Naive thymus-derived CD4-positive, alpha-beta T cell (primary cell): ENCODE measurements at regions of chr7 and their contacts with region 1.

Region 1: GRCh38 chr7:158976849-158977593 is 120.7 kb downstream of the DYNC2I1 start:
- DNase-seq: peak; percentile 77 to 94 (median 85)
- ATAC-seq: peak; percentile 93
- H3K4me3 ChIP-seq: peak overlapping the region; percentile 55
- H3K4me3 Mint-ChIP-seq: peak overlapping the region; percentile 74 to 94 (median 88)
- H3K27ac ChIP-seq: peak overlapping the region; percentile 57
- H3K27ac Mint-ChIP-seq: peak overlapping the region; percentile 72 to 93 (median 83)
- H3K4me1 ChIP-seq: peaks cover 9 to 11% of the 10 kb centered on the region in 2 donors
- H3K4me1 Mint-ChIP-seq: peaks cover 11 to 23% (median 20%) of the 10 kb centered on the region in 7 donors
- H3K27me3 ChIP-seq: no peaks in the 10 kb centered on the region
- H3K27me3 Mint-ChIP-seq: no peaks in the 10 kb centered on the region

Region 2: DNA sequence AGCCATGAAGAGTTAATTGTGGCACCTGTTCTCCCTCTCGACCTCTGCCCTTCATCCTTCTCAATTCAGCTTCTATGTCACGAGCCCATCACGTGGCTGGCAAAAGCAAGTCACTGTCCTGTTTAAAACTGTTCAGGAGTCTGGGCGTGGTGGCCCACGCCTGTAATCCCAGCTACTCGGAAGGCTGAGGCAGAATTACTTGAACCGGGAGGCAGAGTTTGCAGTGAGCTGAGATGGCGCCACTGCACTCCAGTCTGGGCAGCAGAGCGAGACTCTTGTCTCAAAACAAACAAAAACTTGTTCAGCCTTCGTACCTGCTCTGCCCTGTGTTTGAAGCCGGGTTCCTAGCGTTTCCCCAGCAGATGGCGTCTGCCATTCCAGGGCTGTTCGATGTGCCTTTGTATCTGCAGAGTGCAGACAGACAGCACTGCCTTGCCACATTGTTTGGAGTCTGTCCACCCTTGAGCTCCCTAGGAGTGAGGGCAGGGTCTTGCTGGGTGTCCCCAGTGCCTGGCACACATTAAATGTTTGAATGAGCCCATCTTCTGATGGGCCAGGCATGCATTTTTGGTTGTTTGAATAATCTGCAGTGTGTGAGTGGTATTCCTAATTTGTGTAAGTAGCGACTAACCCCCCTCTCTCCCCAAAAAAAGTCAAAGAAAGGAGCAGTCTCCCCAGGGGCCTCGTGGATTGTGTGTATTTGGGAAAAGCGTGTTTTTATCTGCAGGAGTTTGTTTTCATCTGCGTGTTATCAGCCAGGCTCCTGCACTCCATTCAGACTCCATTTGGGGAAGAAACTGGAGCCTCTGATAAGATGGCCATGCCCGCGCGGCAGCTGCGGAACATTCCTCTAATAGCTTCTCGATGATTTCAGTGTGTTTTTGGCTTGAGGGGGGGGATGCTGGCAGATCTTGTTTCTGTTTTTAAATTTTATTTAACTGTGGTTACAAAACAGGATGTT is 1579.0 kb before region 1 on chr7:
- CTCF ChIA-PET with region 1: no interaction called
- POLR2A ChIA-PET with region 1: no interaction called
- intact Hi-C with region 1: no loop called
- DNase-seq: peak in 2 of 9 donors; percentile 26 to 32
- ATAC-seq: peak; percentile 50
- H3K4me3 ChIP-seq: no peak overlapping the region
- H3K4me3 Mint-ChIP-seq: no peak overlapping the region
- H3K27ac ChIP-seq: no peak overlapping the region
- H3K27ac Mint-ChIP-seq: peak overlapping the region in 6 of 9 donors; percentile 9 to 73 (median 45)
- H3K4me1 ChIP-seq: no peaks in the 10 kb centered on the region
- H3K4me1 Mint-ChIP-seq: peaks cover 15 to 31% (median 20%) of the 10 kb centered on the region in 7 donors
- H3K27me3 ChIP-seq: no peaks in the 10 kb centered on the region
- H3K27me3 Mint-ChIP-seq: no peaks in the 10 kb centered on the region

Region 3: DNA sequence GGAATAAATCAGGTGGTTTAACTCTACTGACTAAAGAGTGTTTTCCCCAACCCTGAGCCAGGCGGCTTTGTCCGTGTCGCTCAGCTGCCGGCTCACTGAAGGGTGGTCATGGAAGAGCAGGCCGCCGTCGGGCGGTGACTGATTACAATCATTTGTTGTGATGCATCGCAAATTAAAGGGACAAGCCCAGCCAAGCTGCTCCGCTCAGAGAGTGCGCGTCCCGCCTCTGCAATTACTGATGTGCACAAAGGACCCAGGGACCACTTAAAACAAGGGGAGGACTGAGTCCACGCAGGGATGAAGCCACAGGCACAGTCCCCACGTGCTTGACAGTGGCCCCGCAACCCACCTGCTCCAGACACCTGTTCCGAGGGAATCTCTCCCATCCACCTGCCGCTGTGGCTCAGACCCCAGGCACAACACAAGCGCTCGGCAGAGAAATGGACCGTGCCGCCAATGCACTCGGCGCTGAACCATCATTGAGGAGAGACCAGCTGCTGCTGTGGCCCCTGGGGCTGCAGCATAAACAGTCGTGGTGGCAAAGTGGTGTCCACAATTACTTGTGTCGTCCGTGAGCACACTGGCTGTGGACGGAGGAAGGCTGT is 915.9 kb before region 1 on chr7:
- CTCF ChIA-PET with region 1: no interaction called
- POLR2A ChIA-PET with region 1: no interaction called
- intact Hi-C with region 1: no loop called
- DNase-seq: no peak
- ATAC-seq: no peak
- H3K4me3 ChIP-seq: no peak overlapping the region
- H3K4me3 Mint-ChIP-seq: no peak overlapping the region
- H3K27ac ChIP-seq: no peak overlapping the region
- H3K27ac Mint-ChIP-seq: no peak overlapping the region
- H3K4me1 ChIP-seq: no peaks in the 10 kb centered on the region
- H3K4me1 Mint-ChIP-seq: no peaks in the 10 kb centered on the region
- H3K27me3 ChIP-seq: no peaks in the 10 kb centered on the region
- H3K27me3 Mint-ChIP-seq: peaks cover 0 to 18% (median 0%) of the 10 kb centered on the region in 5 donors

Region 4: GRCh38 chr7:158394936-158395335 is 582.1 kb before region 1 on chr7:
- CTCF ChIA-PET with region 1: no interaction called
- POLR2A ChIA-PET with region 1: no interaction called
- intact Hi-C with region 1: loop called in 1 of 2 experiments (anchors 5 kb)
- DNase-seq: peak in 5 of 9 donors; percentile 16 to 35 (median 25)
- ATAC-seq: no peak
- H3K4me3 ChIP-seq: no peak overlapping the region
- H3K4me3 Mint-ChIP-seq: no peak overlapping the region
- H3K27ac ChIP-seq: no peak overlapping the region
- H3K27ac Mint-ChIP-seq: no peak overlapping the region
- H3K4me1 ChIP-seq: no peaks in the 10 kb centered on the region
- H3K4me1 Mint-ChIP-seq: no peaks in the 10 kb centered on the region
- H3K27me3 ChIP-seq: no peaks in the 10 kb centered on the region
- H3K27me3 Mint-ChIP-seq: no peaks in the 10 kb centered on the region

Region 5: GRCh38 chr7:158495786-158496185 is 481.2 kb before region 1 on chr7:
- CTCF ChIA-PET with region 1: no interaction called
- POLR2A ChIA-PET with region 1: no interaction called
- intact Hi-C with region 1: loop called in 1 of 2 experiments (anchors 2 kb)
- DNase-seq: peak in 1 of 9 donors; percentile 3
- ATAC-seq: peak; percentile 20
- H3K4me3 ChIP-seq: no peak overlapping the region
- H3K4me3 Mint-ChIP-seq: peak overlapping the region in 1 of 10 donors; percentile 43
- H3K27ac ChIP-seq: no peak overlapping the region
- H3K27ac Mint-ChIP-seq: no peak overlapping the region
- H3K4me1 ChIP-seq: no peaks in the 10 kb centered on the region
- H3K4me1 Mint-ChIP-seq: peaks cover 0 to 5% (median 0%) of the 10 kb centered on the region in 7 donors
- H3K27me3 ChIP-seq: no peaks in the 10 kb centered on the region
- H3K27me3 Mint-ChIP-seq: peaks cover 0 to 33% (median 12%) of the 10 kb centered on the region in 5 donors

Region 6: DNA sequence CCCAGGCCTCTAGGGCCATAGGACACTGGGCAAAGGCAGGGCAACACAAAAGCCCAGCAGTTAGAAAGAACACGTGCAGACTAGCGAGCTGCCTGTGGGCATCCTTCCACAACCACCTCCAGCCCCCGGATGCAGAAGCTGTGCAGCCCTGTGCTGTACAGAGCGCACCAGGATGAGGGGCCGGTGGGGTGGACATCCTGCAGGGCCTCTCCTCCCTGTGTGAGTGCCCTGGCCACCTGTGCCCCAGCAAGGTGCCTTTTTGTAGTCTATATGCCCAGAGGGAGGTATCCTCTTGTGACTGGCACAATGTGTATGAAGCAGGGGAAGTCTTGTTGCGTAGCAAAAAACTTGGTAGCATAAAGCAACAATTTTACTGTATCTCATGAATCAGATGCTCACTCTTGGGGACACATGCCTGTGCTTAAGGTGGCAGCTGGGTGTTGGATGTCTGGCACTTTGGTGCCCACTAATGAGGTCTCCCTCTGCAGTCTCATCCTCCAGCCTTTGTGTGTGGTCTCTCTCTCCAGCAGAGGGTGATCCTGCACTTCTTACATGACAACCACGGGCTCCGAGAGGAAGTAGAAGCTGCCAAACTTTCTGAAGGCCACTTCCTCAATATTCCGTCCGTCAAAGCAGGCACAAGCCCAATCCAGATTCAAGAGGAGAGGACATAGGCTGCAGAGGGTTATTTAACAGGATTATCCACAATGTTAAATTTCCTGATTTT is 281.1 kb before region 1 on chr7:
- CTCF ChIA-PET with region 1: interaction called, 97 read pairs
- POLR2A ChIA-PET with region 1: interaction called, 12 read pairs
- intact Hi-C with region 1: loop called in 1 of 2 experiments (anchors 1 kb)
- DNase-seq: peak in 7 of 9 donors; percentile 27 to 69 (median 58)
- ATAC-seq: peak; percentile 97
- H3K4me3 ChIP-seq: no peak overlapping the region
- H3K4me3 Mint-ChIP-seq: peak overlapping the region in 6 of 10 donors; percentile 59 to 77 (median 66)
- H3K27ac ChIP-seq: no peak overlapping the region
- H3K27ac Mint-ChIP-seq: peak overlapping the region; percentile 41 to 87 (median 75)
- H3K4me1 ChIP-seq: peaks cover 0 to 5% of the 10 kb centered on the region in 2 donors
- H3K4me1 Mint-ChIP-seq: peaks cover 5 to 57% (median 11%) of the 10 kb centered on the region in 7 donors
- H3K27me3 ChIP-seq: no peaks in the 10 kb centered on the region
- H3K27me3 Mint-ChIP-seq: no peaks in the 10 kb centered on the region

Region 7: GRCh38 chr7:158760936-158761335 is 216.1 kb before region 1 on chr7:
- CTCF ChIA-PET with region 1: interaction called, 7 read pairs
- POLR2A ChIA-PET with region 1: no interaction called
- intact Hi-C with region 1: loop called in 1 of 2 experiments (anchors 1 kb)
- DNase-seq: peak in 5 of 9 donors; percentile 32 to 52 (median 45)
- ATAC-seq: peak; percentile 57
- H3K4me3 ChIP-seq: no peak overlapping the region
- H3K4me3 Mint-ChIP-seq: no peak overlapping the region
- H3K27ac ChIP-seq: no peak overlapping the region
- H3K27ac Mint-ChIP-seq: peak overlapping the region in 8 of 9 donors; percentile 22 to 87 (median 53)
- H3K4me1 ChIP-seq: no peaks in the 10 kb centered on the region
- H3K4me1 Mint-ChIP-seq: peaks cover 0 to 28% (median 6%) of the 10 kb centered on the region in 7 donors
- H3K27me3 ChIP-seq: no peaks in the 10 kb centered on the region
- H3K27me3 Mint-ChIP-seq: no peaks in the 10 kb centered on the region

Region 8: DNA sequence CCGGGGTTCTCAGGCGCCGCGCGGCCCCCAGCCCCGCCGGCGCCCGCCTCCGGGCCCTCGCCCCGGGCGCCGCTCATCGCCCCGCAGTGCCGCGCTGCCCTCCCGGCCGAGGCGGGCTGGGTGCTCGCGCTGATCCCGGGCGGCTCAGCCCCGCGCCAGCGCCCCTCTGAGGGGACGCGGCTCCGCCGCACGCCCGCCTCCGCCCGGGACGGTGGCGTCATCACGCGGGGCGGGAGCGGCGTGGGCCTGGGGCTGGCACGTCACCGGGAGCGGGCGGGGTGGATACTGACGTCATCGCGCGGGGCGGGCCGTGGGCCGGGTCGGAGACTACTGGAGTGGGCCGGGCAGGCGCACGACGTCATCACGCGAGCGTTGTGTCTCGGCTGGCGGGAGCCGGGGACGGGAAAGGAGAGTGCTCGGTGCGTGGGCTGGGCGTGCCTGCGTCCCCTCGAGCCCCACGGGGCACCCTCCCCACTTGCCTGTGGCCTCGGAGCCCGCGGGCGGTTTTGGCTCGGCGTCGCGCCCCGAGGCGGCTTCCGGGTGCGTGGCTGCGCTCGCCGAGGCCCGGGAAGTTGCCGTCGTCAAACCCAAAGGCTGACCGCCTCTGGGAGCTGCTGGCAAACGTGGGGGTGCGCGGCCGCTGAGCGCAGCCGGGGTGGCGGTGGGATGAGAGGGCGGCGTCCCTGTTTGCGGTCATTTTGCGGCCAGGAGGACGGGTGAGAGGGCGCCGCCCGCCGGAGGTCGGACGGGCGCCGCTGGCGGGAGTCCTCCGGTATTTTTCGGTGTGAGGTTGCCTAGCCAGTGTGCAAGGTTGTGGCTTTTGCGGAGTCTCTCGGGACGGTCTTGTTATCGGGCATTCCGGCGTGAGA is 147.4 kb before region 1 on chr7 and contains the start of gene ESYT2:
- CTCF ChIA-PET with region 1: no interaction called
- POLR2A ChIA-PET with region 1: interaction called, 3 read pairs
- intact Hi-C with region 1: loop called in 1 of 2 experiments (anchors 1 kb)
- DNase-seq: peak; percentile 98 to 100 (median 100)
- ATAC-seq: peak; percentile 88
- H3K4me3 ChIP-seq: peak within 1 kb of the TSS; percentile 67
- H3K4me3 Mint-ChIP-seq: peak within 1 kb of the TSS; percentile 81 to 100 (median 91)
- H3K27ac ChIP-seq: peak within 1 kb of the TSS; percentile 97
- H3K27ac Mint-ChIP-seq: peak within 1 kb of the TSS; percentile 88 to 99 (median 95)
- H3K4me1 ChIP-seq: peaks cover 15 to 23% of the 10 kb centered on the region in 2 donors
- H3K4me1 Mint-ChIP-seq: peaks cover 17 to 46% (median 35%) of the 10 kb centered on the region in 7 donors
- H3K27me3 ChIP-seq: no peaks in the 10 kb centered on the region
- H3K27me3 Mint-ChIP-seq: peaks cover 0 to 11% (median 0%) of the 10 kb centered on the region in 5 donors
- total RNA-seq, gene ESYT2: 103 to 129 (median 113) TPM

Region 9: GRCh38 chr7:159049266-159050025 is 72.4 kb after region 1 on chr7:
- CTCF ChIA-PET with region 1: no interaction called
- POLR2A ChIA-PET with region 1: no interaction called
- intact Hi-C with region 1: no loop called
- DNase-seq: peak in 1 of 9 donors; percentile 15
- ATAC-seq: no peak
- H3K4me3 ChIP-seq: no peak overlapping the region
- H3K4me3 Mint-ChIP-seq: no peak overlapping the region
- H3K27ac ChIP-seq: no peak overlapping the region
- H3K27ac Mint-ChIP-seq: peak overlapping the region in 1 of 9 donors; percentile 3
- H3K4me1 ChIP-seq: no peaks in the 10 kb centered on the region
- H3K4me1 Mint-ChIP-seq: peaks cover 5 to 35% (median 10%) of the 10 kb centered on the region in 7 donors
- H3K27me3 ChIP-seq: no peaks in the 10 kb centered on the region
- H3K27me3 Mint-ChIP-seq: peaks cover 0 to 12% (median 4%) of the 10 kb centered on the region in 5 donors